Sigmoid colon (tissue), 7 donors: ENCODE measurements at regions of chr10 and their contacts with region 1.

Region 1: GRCh38 chr10:77264107-77264506 is 373.5 kb downstream of the KCNMA1 start:
- DNase-seq: no peak
- H3K4me3 ChIP-seq: no peak overlapping the region
- H3K27ac ChIP-seq: no peak overlapping the region
- H3K4me1 ChIP-seq: peaks cover 0 to 51% (median 37%) of the 10 kb centered on the region in 4 donors
- H3K27me3 ChIP-seq: no peaks in the 10 kb centered on the region
- CTCF ChIP-seq: no peak
- EP300 ChIP-seq: no peak
- POLR2A ChIP-seq: no peak

Region 2: GRCh38 chr10:77247031-77247990 is 16.8 kb before region 1 on chr10:
- intact Hi-C with region 1: loop called (anchors 2 kb)
- DNase-seq: no peak
- H3K4me3 ChIP-seq: no peak overlapping the region
- H3K27ac ChIP-seq: peak overlapping the region; percentile 78 to 91 (median 86)
- H3K4me1 ChIP-seq: peaks cover 0 to 97% (median 76%) of the 10 kb centered on the region in 4 donors
- H3K27me3 ChIP-seq: no peaks in the 10 kb centered on the region
- CTCF ChIP-seq: no peak
- EP300 ChIP-seq: peak in 1 of 4 donors; percentile 32
- POLR2A ChIP-seq: no peak

Region 3: DNA sequence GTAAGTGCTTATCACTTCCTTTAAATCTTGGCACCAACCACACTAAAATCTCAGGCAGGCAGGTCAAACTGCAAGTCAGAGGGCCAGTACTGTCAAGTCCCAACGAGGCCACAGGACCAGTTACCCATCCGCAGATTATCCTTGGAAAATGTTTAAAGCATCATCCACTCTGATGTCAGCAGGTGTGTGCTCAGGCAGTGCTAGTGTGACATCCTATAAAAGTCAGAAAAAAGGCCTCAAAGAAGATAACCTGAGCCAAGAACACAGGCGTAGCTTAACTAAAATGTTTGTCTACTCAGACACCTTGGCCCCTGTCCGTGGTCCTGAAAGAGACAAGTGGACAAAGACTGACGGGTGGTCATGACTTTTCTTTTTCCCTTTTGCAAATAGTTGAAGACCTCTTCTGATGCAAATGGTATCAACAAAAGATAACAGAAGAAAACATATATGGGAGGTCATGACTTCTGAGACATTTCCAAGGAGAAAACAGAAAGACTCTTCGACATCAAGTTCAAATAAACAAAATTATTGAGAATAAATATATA is 64.2 kb after region 1 on chr10:
- intact Hi-C with region 1: loop called (anchors 2 kb)
- DNase-seq: no peak
- H3K4me3 ChIP-seq: no peak overlapping the region
- H3K27ac ChIP-seq: no peak overlapping the region
- H3K4me1 ChIP-seq: peaks cover 0 to 35% (median 22%) of the 10 kb centered on the region in 4 donors
- H3K27me3 ChIP-seq: no peaks in the 10 kb centered on the region
- CTCF ChIP-seq: no peak
- EP300 ChIP-seq: no peak
- POLR2A ChIP-seq: no peak

Region 4: GRCh38 chr10:77441353-77442166 is 177.5 kb after region 1 on chr10:
- intact Hi-C with region 1: no loop called
- DNase-seq: no peak
- H3K4me3 ChIP-seq: no peak overlapping the region
- H3K27ac ChIP-seq: peak overlapping the region in 3 of 4 donors; percentile 6 to 27 (median 24)
- H3K4me1 ChIP-seq: peaks cover 0 to 63% (median 30%) of the 10 kb centered on the region in 4 donors
- H3K27me3 ChIP-seq: no peaks in the 10 kb centered on the region
- CTCF ChIP-seq: no peak
- EP300 ChIP-seq: no peak
- POLR2A ChIP-seq: no peak

Region 5: GRCh38 chr10:77756319-77757232 is 492.5 kb after region 1 on chr10:
- intact Hi-C with region 1: no loop called
- DNase-seq: no peak
- H3K4me3 ChIP-seq: no peak overlapping the region
- H3K27ac ChIP-seq: no peak overlapping the region
- H3K4me1 ChIP-seq: peaks cover 0 to 4% (median 0%) of the 10 kb centered on the region in 4 donors
- H3K27me3 ChIP-seq: no peaks in the 10 kb centered on the region
- CTCF ChIP-seq: peak in 2 of 4 experiments; percentile 42 to 48
- EP300 ChIP-seq: no peak
- POLR2A ChIP-seq: no peak